Right cardiac atrium (tissue), 5 donors: ENCODE measurements at regions of chr10 and their contacts with region 1.

Region 1: GRCh38 chr10:32980558-32981468 is 22.8 kb upstream of the ITGB1 start:
- DNase-seq: peak; percentile 91 to 94 (median 94)
- ATAC-seq: peak; percentile 96
- H3K4me3 ChIP-seq: peak overlapping the region; percentile 65
- H3K27ac ChIP-seq: peak overlapping the region; percentile 98
- H3K4me1 ChIP-seq: peaks cover 6% of the 10 kb centered on the region
- H3K27me3 ChIP-seq: no peaks in the 10 kb centered on the region

Region 2: GRCh38 chr10:32958085-32959005 is 22.5 kb before region 1 on chr10 and contains the start of gene ITGB1:
- intact Hi-C with region 1: loop called in 1 of 4 experiments (anchors 2 kb)
- DNase-seq: peak; percentile 98 to 99 (median 99)
- ATAC-seq: peak; percentile 98
- H3K4me3 ChIP-seq: peak within 1 kb of the TSS; percentile 88
- H3K27ac ChIP-seq: peak within 1 kb of the TSS; percentile 95
- H3K4me1 ChIP-seq: peaks cover 4% of the 10 kb centered on the region
- H3K27me3 ChIP-seq: no peaks in the 10 kb centered on the region
- total RNA-seq, gene ITGB1: 453 to 583 (median 494) TPM